Prostate gland (tissue), 2 donors: ENCODE measurements at regions of chr22 and their contacts with region 1.

Region 1: GRCh38 chr22:50627642-50628542 is at the start of gene ARSA:
- DNase-seq: peak; percentile 81
- H3K4me3 ChIP-seq: peak within 1 kb of the TSS; percentile 60 to 61
- H3K27ac ChIP-seq: peak within 1 kb of the TSS; percentile 77 to 78
- H3K4me1 ChIP-seq: no peaks in the 10 kb centered on the region
- H3K27me3 ChIP-seq: no peaks in the 10 kb centered on the region
- CTCF ChIP-seq: peak in 3 of 4 experiments; percentile 19 to 43 (median 24)
- POLR2A ChIP-seq: peak; percentile 69
- total RNA-seq, gene ARSA: 60.7 to 81.7 TPM

Region 2: DNA sequence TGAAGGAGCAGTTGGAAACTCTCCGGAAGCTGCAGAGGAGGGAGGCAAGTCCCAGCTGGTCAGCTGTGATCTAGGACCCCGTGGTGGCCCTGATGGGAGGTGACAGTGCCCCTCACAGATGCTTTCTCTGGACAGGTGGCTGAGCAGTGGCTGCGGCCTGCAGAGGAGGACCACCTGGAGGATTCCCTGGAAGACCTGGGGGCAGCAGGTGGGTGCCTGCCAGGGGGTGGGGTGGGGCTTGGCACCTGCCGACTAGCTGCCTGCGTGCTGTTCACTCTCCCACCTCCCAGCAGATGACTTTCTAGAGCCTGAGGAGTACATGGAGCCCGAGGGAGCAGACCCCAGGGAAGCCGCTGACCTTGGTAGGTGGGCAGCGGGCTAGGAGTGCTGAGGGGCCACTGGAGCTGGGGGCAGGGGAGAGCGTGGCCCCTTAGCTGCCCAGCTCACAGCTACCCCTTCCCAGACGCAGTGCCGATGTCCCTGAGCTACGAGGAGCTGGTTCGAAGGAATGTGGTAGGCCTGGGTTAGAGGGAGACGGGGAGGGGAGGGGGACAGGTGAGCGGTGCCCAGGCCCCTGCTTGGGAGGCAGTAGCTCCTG is 105.6 kb before region 1 on chr22:
- intact Hi-C with region 1: no loop called
- DNase-seq: no peak
- H3K4me3 ChIP-seq: no peak overlapping the region
- H3K27ac ChIP-seq: no peak overlapping the region
- H3K4me1 ChIP-seq: peaks cover 7% of the 10 kb centered on the region
- H3K27me3 ChIP-seq: no peaks in the 10 kb centered on the region
- CTCF ChIP-seq: no peak
- POLR2A ChIP-seq: no peak

Region 3: GRCh38 chr22:50582562-50583293 is 45.2 kb before region 1 on chr22 and contains the start of gene CHKB:
- intact Hi-C with region 1: loop called (anchors 5 kb)
- DNase-seq: peak; percentile 99
- H3K4me3 ChIP-seq: peak within 1 kb of the TSS; percentile 71 to 84
- H3K27ac ChIP-seq: peak within 1 kb of the TSS; percentile 95 to 98
- H3K4me1 ChIP-seq: peaks cover 12% of the 10 kb centered on the region
- H3K27me3 ChIP-seq: no peaks in the 10 kb centered on the region
- CTCF ChIP-seq: peak in 1 of 4 experiments; percentile 29
- POLR2A ChIP-seq: peak; percentile 97
- total RNA-seq, gene CHKB: 52.1 to 112 TPM